Heart left ventricle (tissue), 16 donors: ENCODE measurements at regions of chr12 and their contacts with region 1.

Region 1: GRCh38 chr12:8949342-8950220 is at the start of gene M6PR:
- DNase-seq: peak; percentile 94 to 96 (median 95)
- ATAC-seq: peak; percentile 94 to 97 (median 96)
- H3K4me3 ChIP-seq: peak within 1 kb of the TSS; percentile 52 to 96 (median 82)
- H3K27ac ChIP-seq: peak within 1 kb of the TSS; percentile 93 to 99 (median 98)
- H3K4me1 ChIP-seq: peaks cover 0 to 57% (median 20%) of the 10 kb centered on the region in 12 donors
- H3K27me3 ChIP-seq: no peaks in the 10 kb centered on the region
- CTCF ChIP-seq: peak; percentile 38 to 83 (median 59)
- POLR2A ChIP-seq: peak in 1 of 2 donors; percentile 71
- total RNA-seq, gene M6PR: 66.7 to 150 (median 102) TPM

Region 2: DNA sequence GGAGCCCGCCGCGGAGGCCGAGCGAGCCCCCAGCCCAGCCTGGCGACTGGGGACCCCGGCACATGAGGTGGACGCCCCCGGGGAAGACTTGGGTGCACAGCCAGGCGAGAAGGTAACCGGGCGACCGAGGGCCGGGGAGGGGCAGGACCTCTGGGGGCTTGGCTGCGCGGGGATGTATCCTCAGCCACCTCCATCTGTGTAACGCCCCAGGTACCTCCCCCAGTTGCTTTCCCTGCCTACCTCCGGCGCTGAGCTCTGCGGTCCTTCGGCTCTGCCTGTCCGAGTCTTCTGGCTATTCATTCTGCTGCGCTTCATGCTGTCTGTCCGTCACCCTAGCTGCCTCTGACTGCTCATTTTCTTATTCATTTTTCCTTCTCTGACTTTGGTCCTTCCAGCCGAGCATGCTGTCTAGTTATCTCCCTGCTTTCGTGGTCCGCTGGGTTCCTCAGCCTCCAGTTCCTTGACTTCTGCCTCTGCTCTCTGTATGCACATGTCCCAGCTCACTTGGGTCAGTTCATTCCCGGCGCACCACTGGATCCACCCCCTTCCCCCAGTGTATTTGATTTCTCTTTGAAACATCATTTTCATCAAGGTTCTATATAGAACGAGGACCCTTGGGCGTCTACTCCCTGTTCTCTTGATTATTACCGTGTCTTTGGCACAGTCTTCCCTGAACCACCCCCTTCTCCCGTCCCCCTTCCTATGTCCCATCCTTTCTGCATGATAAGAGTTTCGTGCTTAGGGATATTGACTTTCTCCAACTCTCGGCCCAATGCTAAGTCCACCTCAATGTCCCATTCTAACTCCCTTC is 34.7 kb before region 1 on chr12:
- intact Hi-C with region 1: loop called in 3 of 10 experiments (anchors 2 kb)
- DNase-seq: peak; percentile 37 to 69 (median 52)
- ATAC-seq: peak; percentile 43 to 76 (median 72)
- H3K4me3 ChIP-seq: peak overlapping the region; percentile 61 to 91 (median 74)
- H3K27ac ChIP-seq: peak overlapping the region; percentile 3 to 93 (median 86)
- H3K4me1 ChIP-seq: peaks cover 0 to 40% (median 19%) of the 10 kb centered on the region in 12 donors
- H3K27me3 ChIP-seq: no peaks in the 10 kb centered on the region
- CTCF ChIP-seq: no peak
- POLR2A ChIP-seq: no peak

Region 3: DNA sequence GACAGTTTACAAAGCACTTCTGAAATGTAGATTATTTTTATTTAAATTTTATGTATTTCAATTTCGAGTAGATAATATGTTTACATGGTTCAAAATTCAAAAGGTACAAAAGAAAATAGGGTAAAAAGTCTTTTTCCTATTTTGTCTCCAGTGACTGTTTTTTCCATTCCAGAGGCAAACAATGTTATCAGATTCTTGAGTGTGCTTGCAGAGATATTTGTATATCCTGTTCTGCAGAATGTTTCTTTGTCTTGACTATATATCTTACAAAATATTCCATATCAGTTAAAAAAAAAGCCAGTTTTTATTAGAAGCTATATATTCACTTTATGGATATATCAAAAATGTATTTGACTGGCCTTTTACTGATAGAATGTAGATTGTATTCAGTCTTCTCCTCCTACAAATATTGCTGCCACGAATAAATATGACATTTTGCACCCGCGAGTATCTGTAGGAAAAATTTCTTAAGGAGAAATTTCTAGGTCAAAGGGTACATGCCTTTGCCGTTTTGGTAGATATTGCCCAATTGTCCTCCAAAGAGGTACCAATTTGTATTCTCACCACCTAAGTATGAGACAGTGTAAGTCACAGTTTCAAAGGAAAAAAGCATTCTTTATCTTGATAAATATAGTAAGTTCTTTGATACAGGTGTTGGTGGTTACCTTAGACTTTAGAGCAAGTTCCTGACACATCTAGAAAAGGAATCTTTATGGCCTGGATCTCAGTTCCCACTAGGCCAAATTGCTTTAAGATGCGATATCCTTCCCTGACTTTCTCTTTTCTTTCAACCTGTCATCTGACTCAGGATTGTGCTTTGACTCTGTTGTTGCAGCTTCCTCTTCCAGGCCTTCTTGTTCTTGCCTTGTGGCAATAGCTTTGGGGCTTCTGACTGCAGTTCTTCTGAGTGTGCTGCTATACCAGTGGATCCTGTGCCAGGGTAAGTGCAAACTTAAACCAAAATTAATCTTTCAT is 42.1 kb after region 1 on chr12:
- intact Hi-C with region 1: loop called in 2 of 10 experiments (anchors 5 kb)
- DNase-seq: no peak
- ATAC-seq: no peak
- H3K4me3 ChIP-seq: peak overlapping the region in 1 of 12 donors; percentile 41
- H3K27ac ChIP-seq: peak overlapping the region in 8 of 12 donors; percentile 4 to 58 (median 21)
- H3K4me1 ChIP-seq: peaks cover 0 to 62% (median 9%) of the 10 kb centered on the region in 12 donors
- H3K27me3 ChIP-seq: no peaks in the 10 kb centered on the region
- CTCF ChIP-seq: no peak
- POLR2A ChIP-seq: no peak

Region 4: DNA sequence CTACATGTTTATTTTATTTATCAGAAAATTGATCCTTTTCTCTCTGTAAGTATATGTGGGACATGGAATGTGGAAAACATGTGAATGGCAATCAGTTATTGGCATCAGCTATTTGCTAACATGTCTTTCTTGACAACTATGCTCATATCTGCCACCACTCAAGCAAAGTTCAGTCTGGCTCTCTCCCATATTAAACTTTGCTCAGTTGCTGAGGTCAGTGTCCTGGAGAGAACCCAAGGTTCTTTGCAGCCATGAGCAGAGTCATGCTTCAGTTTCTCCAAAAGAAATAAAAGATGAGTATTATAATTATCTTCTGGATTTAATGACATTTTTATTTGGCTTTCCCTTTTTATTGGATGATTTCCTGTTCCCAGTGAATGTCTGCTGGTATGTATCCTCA is 123.5 kb after region 1 on chr12:
- intact Hi-C with region 1: no loop called
- DNase-seq: no peak
- ATAC-seq: peak in 3 of 4 donors; percentile 73 to 78 (median 74)
- H3K4me3 ChIP-seq: no peak overlapping the region
- H3K27ac ChIP-seq: peak overlapping the region in 3 of 12 donors; percentile 2 to 18 (median 12)
- H3K4me1 ChIP-seq: peaks cover 0 to 11% (median 0%) of the 10 kb centered on the region in 12 donors
- H3K27me3 ChIP-seq: no peaks in the 10 kb centered on the region
- CTCF ChIP-seq: no peak
- POLR2A ChIP-seq: no peak